ENCODE measurements at regions of chr2 and their contacts with region 1.

Region 1: DNA sequence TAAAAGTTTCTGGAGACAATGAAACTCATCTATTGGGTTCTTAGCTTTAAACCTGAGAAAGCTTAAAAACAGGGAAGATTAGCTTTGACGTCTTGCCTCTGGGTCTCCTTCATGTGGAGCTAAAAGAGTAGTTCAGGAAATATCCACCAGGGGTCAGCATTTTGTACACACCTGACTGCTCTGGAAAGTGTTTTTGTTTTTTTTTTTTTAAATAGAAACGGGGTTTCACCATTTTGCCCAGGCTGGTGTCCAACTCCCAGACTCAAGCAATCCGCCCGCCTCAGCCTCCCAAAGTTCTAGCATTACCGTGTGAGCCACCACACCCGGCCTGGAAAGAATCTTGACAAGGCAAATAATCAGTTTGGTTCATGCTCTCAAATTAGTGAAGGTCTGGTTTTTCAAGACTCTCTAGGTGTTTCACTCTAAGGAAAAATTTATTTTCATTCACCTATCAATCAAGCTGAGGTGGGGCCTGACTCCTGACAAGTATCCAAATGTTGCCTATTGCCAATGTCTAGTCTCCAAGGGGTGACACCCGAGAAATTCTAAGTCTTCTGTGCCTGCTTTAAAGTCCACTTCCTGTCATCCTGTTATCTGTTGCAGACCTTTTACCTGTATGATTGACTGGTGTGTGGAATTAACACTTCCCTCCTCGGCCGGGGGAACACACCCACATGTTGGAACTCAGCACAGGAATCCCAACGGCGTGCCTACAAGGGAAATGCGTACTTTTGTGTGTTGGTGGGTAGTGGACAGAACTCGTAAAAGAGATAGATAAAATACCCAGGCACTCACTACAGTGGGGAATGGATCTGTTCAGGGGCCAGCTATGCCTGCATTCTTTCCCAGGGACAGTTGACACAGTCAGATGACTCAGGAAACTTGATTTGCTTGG is 11.3 kb downstream of the IL1RN start:
- DNase-seq: no peak
- ATAC-seq: peak; percentile 76
- H3K4me3 ChIP-seq: no peak overlapping the region
- H3K27ac ChIP-seq: no peak overlapping the region
- H3K4me1 ChIP-seq: no peaks in the 10 kb centered on the region
- H3K27me3 ChIP-seq: peaks cover 0 to 3% of the 10 kb centered on the region in 2 donors

Region 2: GRCh38 chr2:112020561-112020960 is 1118.1 kb before region 1 on chr2:
- intact Hi-C with region 1: no loop called
- DNase-seq: no peak
- ATAC-seq: no peak
- H3K4me3 ChIP-seq: no peak overlapping the region
- H3K27ac ChIP-seq: no peak overlapping the region
- H3K4me1 ChIP-seq: no peaks in the 10 kb centered on the region
- H3K27me3 ChIP-seq: no peaks in the 10 kb centered on the region

Region 3: DNA sequence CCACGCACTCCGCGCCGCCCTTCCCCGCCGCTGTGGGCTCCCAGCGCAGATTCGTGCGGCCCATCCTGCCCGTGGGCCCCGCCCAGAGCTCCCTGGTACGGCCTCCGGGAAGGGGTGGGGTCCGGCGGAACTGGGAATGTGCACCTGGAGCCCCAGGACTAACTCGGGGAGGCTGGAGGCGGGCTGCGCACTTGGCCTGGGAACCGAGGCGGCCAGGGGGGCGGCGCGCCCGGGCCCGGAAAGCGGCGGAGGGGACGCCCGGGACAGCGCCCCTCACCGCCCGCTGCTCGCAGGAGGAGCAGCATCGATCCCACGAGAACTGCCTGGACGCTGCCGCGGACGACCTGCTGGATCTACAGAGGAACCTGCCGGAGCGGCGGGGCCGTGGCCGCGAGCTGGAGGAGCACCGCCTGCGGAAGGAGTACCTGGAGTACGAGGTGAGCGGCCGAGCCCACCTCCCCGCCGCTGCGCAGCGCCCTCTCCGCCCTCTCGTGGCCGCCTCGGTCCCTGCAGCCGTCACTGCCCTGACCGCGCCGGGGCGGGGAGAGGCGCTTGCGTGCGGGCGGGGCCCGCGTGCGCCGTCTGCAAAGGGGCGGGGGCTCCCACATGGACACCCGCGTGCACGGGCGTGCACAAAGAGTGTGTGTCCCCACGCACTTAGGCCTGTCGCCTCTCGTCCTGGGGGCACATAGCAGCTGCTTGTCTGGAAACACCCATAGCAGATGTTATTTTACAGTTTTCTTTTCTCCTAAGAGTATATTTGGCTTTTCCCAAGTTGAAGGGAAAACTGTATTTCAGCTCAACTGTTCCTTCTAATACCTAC is 60.3 kb after region 1 on chr2:
- intact Hi-C with region 1: loop called in 1 of 2 experiments (anchors 5 kb)
- DNase-seq: peak; percentile 86 to 93
- ATAC-seq: peak; percentile 93
- H3K4me3 ChIP-seq: peak overlapping the region; percentile 61 to 81
- H3K27ac ChIP-seq: no peak overlapping the region
- H3K4me1 ChIP-seq: no peaks in the 10 kb centered on the region
- H3K27me3 ChIP-seq: no peaks in the 10 kb centered on the region

Region 4: DNA sequence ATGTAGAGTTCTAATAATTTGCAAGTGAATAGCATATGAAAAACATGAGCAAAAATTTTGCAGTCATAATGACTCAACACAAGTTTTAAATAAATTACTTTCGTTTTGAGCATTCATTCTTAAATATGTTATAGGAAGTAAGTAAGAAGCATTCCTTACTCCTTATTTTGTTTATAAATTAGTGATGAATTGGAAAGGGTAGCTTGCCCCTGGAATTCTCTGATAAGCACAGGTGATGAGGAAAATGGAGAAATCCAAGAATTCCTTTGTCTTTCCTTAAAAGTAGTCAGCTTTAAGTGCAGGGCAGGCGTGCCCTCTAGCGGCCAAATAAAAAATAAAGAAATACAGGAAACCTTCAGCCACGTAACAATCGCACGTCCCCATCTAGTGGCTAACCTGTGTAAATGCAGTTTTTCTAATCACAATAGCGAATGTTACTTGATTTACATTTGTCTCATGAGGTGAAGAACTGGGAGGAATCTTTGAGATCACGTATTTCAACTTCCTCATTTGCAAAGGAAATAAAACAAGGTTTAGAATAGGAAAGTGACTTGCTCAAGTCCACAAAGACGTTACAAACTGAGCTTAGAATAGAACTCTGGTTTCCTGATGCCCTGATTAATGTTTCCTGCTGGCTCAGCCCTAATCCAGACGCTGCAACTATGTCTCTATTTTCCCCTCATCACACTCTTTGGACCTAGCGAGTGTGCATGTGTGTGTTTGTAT is 251.6 kb after region 1 on chr2:
- intact Hi-C with region 1: loop called in 1 of 2 experiments (anchors 5 kb)
- DNase-seq: no peak
- ATAC-seq: peak; percentile 94
- H3K4me3 ChIP-seq: no peak overlapping the region
- H3K27ac ChIP-seq: no peak overlapping the region
- H3K4me1 ChIP-seq: no peaks in the 10 kb centered on the region
- H3K27me3 ChIP-seq: no peaks in the 10 kb centered on the region